ENCODE measurements at regions of chr20 and their contacts with region 1.

Region 1: DNA sequence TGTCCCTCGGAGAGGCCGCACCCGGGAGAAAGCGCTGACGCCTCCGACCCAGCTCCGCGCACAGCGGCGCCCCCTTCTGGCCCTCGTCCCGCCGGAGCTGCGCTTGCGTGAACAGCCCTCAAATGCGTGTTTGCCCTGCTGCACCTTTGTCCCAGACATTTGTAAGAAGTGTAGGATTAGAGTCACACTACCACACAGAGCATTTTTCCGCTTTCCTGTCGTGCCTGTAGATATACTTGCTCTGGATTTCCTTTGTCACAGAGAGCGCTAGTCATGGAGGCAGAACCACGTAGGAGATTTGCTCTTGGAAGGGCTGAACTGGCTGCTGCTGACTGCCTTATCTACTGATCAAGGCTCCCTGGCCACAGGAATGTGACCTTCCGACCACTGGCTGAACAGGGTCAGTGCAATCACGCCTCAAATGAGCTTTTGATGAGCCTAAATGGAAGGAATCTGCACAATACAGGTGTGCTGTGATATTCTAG is 62.3 kb downstream of the PAX1 start:
- H3K4me3 ChIP-seq: peak overlapping the region; percentile 24; the same call in 1 of the 2 replicates
- H3K27ac ChIP-seq: no peak overlapping the region
- H3K4me1 ChIP-seq: no peaks in the 10 kb centered on the region
- CTCF ChIP-seq: peak; percentile 74

Region 2: DNA sequence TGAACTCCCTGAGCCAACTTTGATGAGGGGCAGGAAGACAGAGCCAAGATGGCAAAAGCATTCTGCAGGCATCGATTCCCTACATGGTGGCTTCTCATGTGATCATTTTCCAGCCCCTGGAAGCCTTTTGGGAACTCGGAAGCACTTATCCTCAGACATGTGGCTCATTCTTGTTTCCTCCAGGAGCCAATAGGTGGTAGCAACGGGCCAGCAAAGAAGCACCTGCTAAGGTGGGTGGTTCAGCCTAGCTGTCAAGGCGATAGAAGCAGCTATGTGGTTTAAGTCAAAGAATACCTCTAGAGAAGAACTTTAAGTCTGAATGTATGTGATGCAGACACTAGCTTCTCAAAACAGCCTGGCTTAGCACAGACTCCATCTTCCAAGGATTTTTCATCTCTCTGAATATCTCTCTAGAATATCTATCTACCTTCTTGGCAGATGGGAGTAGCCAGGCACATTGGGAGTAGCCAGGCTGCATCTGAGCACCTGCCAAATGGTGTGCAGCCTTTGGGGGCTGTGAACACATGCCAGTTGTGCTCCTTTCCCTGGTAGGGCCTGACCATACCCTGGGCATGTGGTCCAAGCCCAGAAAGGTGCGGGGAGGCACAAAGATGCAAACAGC is 127.1 kb before region 1 on chr20:
- CTCF ChIA-PET with region 1: interaction called, 10 read pairs
- POLR2A ChIA-PET with region 1: no interaction called
- H3K4me3 ChIP-seq: no peak overlapping the region
- H3K27ac ChIP-seq: no peak overlapping the region
- H3K4me1 ChIP-seq: no peaks in the 10 kb centered on the region
- CTCF ChIP-seq: peak; percentile 50; the same call in 1 of the 2 replicates

Region 3: DNA sequence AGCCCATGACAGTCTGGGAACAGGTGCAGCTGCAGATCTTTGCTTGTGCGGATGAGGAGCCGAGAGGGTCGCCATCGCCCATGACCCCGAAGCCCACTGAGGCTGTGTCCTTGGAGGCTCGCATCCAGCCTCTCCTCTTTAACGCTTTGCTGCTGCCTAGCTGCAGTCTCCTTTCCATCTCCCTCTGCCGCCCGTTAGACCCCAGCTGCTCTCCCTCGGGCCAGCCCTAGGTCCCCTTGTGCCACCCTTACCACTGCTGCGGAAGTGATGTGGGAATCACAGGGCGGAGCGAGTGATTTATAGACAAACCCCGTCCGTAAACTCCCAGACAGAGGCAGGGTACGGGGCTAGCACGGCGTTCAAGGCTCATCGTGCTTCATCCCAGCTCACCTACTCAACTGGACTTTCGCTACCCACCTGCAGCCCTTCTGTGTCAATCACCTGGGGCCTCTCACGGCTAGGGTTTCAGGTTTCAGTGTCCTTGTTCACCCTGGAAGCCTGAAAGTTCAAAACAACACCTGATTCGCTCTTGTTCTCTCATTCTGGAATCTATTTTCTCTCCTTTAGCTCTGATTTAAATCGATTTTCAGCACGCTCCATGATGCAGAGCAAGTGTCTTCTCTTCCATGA is 13.8 kb after region 1 on chr20:
- CTCF ChIA-PET with region 1: interaction called, 11 read pairs
- POLR2A ChIA-PET with region 1: no interaction called
- H3K4me3 ChIP-seq: no peak overlapping the region
- H3K27ac ChIP-seq: no peak overlapping the region
- H3K4me1 ChIP-seq: no peaks in the 10 kb centered on the region
- CTCF ChIP-seq: no peak

Measured in HEK293 (cell line).